Mammary epithelial cell (primary cell): ENCODE measurements at regions of chr6 and their contacts with region 1.

Region 1: GRCh38 chr6:124149646-124150045 is 346.0 kb downstream of the NKAIN2 start:
- DNase-seq: no peak
- H3K4me3 ChIP-seq: no peak overlapping the region
- H3K27ac ChIP-seq: no peak overlapping the region
- H3K4me1 ChIP-seq: no peaks in the 10 kb centered on the region
- H3K27me3 ChIP-seq: no peaks in the 10 kb centered on the region
- CTCF ChIP-seq: no peak

Region 2: DNA sequence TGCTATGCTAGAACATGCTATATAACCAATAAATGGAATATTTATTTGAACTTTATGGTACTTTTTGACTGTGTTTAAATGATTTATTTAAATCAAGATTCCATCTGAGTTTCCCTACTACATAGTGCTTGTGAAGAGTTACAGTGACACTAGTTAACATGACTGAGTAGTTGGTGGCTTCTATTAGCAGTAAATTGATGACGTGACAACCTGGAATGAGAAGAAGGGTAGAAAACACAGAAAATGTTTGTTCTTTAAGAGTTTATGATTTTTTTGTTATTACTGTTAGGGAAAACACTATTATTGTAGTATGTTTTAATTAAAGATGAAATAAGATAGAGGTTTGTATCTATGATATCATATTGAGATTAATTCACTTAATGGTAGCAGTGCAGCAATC is 43.6 kb before region 1 on chr6:
- CTCF ChIA-PET with region 1: no interaction called
- dilution Hi-C with region 1: no loop called
- in situ Hi-C with region 1: no loop called
- intact Hi-C with region 1: loop called (anchors 1 kb)
- DNase-seq: no peak
- H3K4me3 ChIP-seq: no peak overlapping the region
- H3K27ac ChIP-seq: no peak overlapping the region
- H3K4me1 ChIP-seq: no peaks in the 10 kb centered on the region
- H3K27me3 ChIP-seq: no peaks in the 10 kb centered on the region
- CTCF ChIP-seq: no peak

Region 3: GRCh38 chr6:124683507-124683906 is 533.9 kb after region 1 on chr6:
- CTCF ChIA-PET with region 1: no interaction called
- dilution Hi-C with region 1: no loop called
- in situ Hi-C with region 1: no loop called
- intact Hi-C with region 1: no loop called
- DNase-seq: no peak
- H3K4me3 ChIP-seq: no peak overlapping the region
- H3K27ac ChIP-seq: no peak overlapping the region
- H3K4me1 ChIP-seq: no peaks in the 10 kb centered on the region
- H3K27me3 ChIP-seq: peaks cover 2% of the 10 kb centered on the region
- CTCF ChIP-seq: no peak